ENCODE measurements at regions of chr17 and their contacts with region 1.

Region 1: DNA sequence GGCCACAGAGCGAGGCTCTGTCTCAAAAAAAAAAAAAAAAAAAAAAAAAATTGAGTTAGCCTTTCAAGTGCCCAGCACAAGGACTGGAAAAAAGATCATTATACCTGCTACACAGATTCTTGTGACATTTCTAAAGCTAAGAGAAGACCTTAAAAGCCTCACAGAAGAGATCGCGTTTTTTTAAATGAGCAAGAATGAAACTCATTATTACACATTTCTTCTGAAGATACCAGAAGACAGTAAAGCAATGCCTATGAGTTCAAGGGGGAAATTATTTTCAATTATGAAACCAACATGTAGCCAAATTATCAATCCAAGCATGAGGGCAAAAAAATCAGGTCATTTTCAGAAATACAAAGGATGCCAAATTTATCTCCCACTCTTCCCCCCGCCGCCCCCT is 56.8 kb downstream of the MED13 start:
- DNase-seq: no peak
- ATAC-seq: no peak
- H3K4me3 ChIP-seq: no peak overlapping the region
- H3K27ac ChIP-seq: no peak overlapping the region
- H3K4me1 ChIP-seq: no peaks in the 10 kb centered on the region
- H3K27me3 ChIP-seq: no peaks in the 10 kb centered on the region
- CTCF ChIP-seq: no peak

Region 2: DNA sequence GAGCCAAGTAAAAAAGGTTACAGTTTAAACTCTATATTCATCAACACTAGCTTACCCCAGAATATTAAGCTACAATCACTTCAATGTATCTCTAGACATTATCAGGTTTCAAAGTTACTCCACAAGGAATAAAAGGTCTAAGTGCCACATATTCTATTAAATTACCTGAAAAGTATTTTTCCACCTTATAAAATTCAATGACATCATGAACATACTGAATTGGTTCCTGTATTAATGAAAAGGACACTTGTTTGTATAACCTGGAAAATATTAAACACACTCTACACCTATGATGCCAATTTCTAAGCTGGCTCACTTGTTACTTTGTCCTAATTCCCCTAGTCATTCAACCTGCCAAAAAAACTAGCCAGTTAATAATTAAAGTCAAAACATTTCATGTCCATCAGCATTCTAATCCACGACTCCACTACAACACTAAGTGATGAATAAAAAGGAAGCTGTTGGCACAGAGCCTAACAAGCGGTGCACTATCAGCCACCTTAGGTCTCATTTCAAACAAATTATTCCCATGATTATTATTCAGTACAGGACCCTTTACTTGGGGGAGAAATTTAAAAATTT is 44.6 kb after region 1 on chr17:
- intact Hi-C with region 1: loop called in 1 of 2 experiments (anchors 10 kb)
- DNase-seq: no peak
- ATAC-seq: no peak
- H3K4me3 ChIP-seq: no peak overlapping the region
- H3K27ac ChIP-seq: no peak overlapping the region
- H3K4me1 ChIP-seq: peaks cover 35% of the 10 kb centered on the region
- H3K27me3 ChIP-seq: no peaks in the 10 kb centered on the region
- CTCF ChIP-seq: no peak

Region 3: GRCh38 chr17:63052639-63053038 is 1044.3 kb after region 1 on chr17:
- intact Hi-C with region 1: no loop called
- DNase-seq: no peak
- ATAC-seq: no peak
- H3K4me3 ChIP-seq: no peak overlapping the region
- H3K27ac ChIP-seq: no peak overlapping the region
- H3K4me1 ChIP-seq: no peaks in the 10 kb centered on the region
- H3K27me3 ChIP-seq: no peaks in the 10 kb centered on the region
- CTCF ChIP-seq: no peak